Dorsolateral prefrontal cortex (tissue), 120 donors: ENCODE measurements at regions of chr1 and their contacts with region 1.

Region 1: DNA sequence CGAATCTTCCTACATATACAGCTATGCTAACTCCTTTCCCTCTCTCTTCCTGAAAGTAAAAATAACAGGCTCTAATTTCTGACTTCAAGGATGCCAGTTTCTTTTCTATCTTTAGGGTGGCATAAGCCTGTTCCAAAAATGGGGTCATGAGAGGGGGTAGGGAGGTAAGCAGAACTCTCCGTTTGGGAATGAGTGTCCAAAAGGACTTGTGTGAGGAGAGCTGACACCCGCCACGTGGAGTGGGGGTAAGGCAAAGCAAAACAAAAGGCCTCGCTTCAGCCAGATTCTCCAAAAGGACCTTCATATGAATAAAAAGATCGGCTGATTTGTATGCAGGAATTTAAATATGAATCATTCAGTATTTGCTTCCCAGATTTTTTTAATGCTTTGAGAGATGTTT is 28.6 kb downstream of the PLPPR4 start:
- DNase-seq: no peak
- H3K4me3 ChIP-seq: no peak overlapping the region
- H3K27ac ChIP-seq: peak overlapping the region in 2 of 59 donors; percentile 17 to 22
- H3K27me3 ChIP-seq: no peaks in the 10 kb centered on the region
- CTCF ChIP-seq: no peak

Region 2: DNA sequence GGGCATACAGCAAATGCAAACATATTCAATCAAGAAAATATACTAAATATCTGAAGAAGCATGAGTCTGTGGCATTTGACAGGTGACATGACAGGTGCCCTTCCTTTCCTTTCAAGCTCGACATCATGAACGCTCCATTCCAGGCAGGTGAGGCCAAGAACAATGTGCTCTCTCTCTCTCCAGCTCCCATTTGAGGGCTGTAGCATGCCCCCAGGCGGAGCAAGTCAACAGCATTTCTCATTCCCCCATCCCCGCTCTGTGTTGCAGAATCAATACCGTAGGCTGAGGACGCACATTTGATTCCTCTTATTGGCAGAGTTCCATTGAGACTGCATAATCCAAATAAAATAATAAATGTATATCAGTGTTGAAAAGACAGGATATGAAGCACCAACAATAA is 53.2 kb before region 1 on chr1:
- intact Hi-C with region 1: loop called in 1 of 2 experiments (anchors 2 kb)
- DNase-seq: no peak
- H3K4me3 ChIP-seq: no peak overlapping the region
- H3K27ac ChIP-seq: no peak overlapping the region
- H3K27me3 ChIP-seq: no peaks in the 10 kb centered on the region
- CTCF ChIP-seq: no peak

Region 3: GRCh38 chr1:99496067-99496466 is 203.2 kb after region 1 on chr1:
- intact Hi-C with region 1: no loop called
- DNase-seq: no peak
- H3K4me3 ChIP-seq: no peak overlapping the region
- H3K27ac ChIP-seq: no peak overlapping the region
- H3K27me3 ChIP-seq: peaks cover 0 to 11% (median 0%) of the 10 kb centered on the region in 45 donors
- CTCF ChIP-seq: no peak